PC-9 (cell line): ENCODE measurements at regions of chr17 and their contacts with region 1.

Region 1: DNA sequence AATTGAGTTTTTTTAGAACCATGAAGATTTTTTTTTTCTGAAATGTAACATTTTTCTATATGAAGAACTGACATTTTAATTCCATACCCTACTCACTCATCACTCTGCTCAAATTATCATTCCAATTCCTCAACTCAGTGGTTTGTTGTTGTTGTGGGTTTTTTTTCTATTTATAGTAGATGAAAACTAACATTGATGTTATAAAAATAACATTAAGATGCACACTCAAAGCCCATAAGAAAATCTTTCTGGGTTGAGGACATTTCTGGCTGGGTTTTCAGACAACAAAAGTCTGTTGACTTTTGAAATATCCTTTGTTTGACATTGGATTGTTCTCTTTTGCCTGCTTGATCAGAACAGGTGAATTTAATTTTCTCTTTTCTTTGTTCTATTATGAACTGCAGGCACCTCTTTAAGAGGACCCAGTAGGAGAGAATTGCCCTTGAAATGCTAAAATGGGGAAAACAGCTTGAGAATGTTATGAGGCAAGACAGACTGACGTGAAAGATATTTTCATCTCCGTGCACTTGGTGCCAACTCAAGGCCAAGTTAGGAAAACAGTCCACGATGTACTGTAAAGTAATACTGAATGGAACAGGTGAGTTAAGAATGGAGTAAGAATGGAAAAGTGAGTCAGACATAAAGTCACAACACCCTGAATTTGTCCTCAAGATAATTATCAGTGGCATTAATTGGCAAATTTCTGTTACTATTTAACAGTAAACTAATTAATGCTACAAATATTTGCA is 16.1 kb upstream of the ABCA5 start:
- DNase-seq: no peak
- H3K4me3 ChIP-seq: no peak overlapping the region
- H3K27ac ChIP-seq: no peak overlapping the region
- H3K4me1 ChIP-seq: peaks cover 13% of the 10 kb centered on the region
- H3K27me3 ChIP-seq: no peaks in the 10 kb centered on the region
- CTCF ChIP-seq: no peak

Region 2: GRCh38 chr17:69269131-69269998 is 73.7 kb before region 1 on chr17:
- CTCF ChIA-PET with region 1: no interaction called
- POLR2A ChIA-PET with region 1: no interaction called
- intact Hi-C with region 1: no loop called
- DNase-seq: peak in 1 of 2 experiments; percentile 93
- H3K4me3 ChIP-seq: peak overlapping the region; percentile 11; the same call in 1 of the 2 replicates
- H3K27ac ChIP-seq: peak overlapping the region; percentile 61
- H3K4me1 ChIP-seq: peaks cover 30% of the 10 kb centered on the region
- H3K27me3 ChIP-seq: no peaks in the 10 kb centered on the region
- CTCF ChIP-seq: no peak

Region 3: GRCh38 chr17:69287168-69287567 is 55.9 kb before region 1 on chr17:
- CTCF ChIA-PET with region 1: no interaction called
- POLR2A ChIA-PET with region 1: no interaction called
- intact Hi-C with region 1: loop called (anchors 10 kb)
- DNase-seq: no peak
- H3K4me3 ChIP-seq: no peak overlapping the region
- H3K27ac ChIP-seq: no peak overlapping the region
- H3K4me1 ChIP-seq: no peaks in the 10 kb centered on the region
- H3K27me3 ChIP-seq: no peaks in the 10 kb centered on the region
- CTCF ChIP-seq: no peak